ENCODE measurements at regions of chr4 and their contacts with region 1.

Region 1: DNA sequence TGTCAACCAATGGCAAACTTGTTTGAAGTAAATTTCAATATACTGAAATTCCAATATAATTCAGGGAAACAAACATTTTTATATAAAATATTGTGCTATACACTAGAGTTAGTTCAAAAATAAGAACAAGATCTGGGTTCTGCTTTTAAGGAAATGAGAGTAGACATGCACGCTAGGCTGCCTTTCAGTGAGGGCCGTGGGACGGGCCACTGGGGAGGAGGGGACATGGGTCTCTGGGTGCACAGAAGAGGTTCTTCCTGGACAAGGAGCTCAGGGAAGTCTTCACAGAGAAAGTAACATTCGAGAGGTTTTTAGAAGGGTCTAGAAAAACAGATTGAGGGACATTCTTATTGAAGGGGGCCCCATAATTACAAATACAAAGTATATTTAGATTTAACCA is 64.4 kb downstream of the SHROOM3 start:
- DNase-seq: no peak
- H3K4me3 ChIP-seq: no peak overlapping the region
- H3K27ac ChIP-seq: no peak overlapping the region
- H3K4me1 ChIP-seq: peaks cover 0 to 15% (median 11%) of the 10 kb centered on the region in 4 donors
- H3K27me3 ChIP-seq: no peaks in the 10 kb centered on the region
- CTCF ChIP-seq: no peak
- EP300 ChIP-seq: no peak
- POLR2A ChIP-seq: no peak

Region 2: DNA sequence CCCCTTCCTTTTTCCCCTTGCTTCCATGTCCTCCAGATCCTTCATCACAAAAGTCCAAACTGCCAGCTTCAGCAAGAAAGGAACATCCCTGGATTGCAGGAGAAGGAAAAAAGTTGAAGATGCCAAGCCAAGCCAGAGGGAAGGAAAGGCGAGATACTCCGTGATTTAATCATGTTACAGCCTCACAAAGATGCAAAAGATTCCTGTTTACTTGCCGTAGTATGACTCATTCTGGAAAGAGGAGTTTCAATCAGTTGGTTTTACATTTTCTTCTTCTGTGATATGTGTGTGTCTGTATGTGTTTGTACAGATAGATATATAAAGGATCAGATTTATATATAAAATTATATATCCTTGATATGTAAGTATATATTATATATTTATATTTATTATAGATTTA is 1774.5 kb before region 1 on chr4:
- in situ Hi-C with region 1: no loop called
- intact Hi-C with region 1: loop called (anchors 5 kb)
- DNase-seq: no peak
- H3K4me3 ChIP-seq: no peak overlapping the region
- H3K27ac ChIP-seq: no peak overlapping the region
- H3K4me1 ChIP-seq: no peaks in the 10 kb centered on the region
- H3K27me3 ChIP-seq: no peaks in the 10 kb centered on the region
- CTCF ChIP-seq: no peak
- EP300 ChIP-seq: no peak
- POLR2A ChIP-seq: no peak

Measured in transverse colon (tissue), 4 donors.